ENCODE measurements at regions of chr2 and their contacts with region 1.

Region 1: GRCh38 chr2:164369366-164369765 is 251.9 kb downstream of the GRB14 start:
- DNase-seq: no peak
- ATAC-seq: no peak
- H3K4me3 ChIP-seq: no peak overlapping the region
- H3K27ac ChIP-seq: no peak overlapping the region
- H3K4me1 ChIP-seq: no peaks in the 10 kb centered on the region
- H3K27me3 ChIP-seq: no peaks in the 10 kb centered on the region
- CTCF ChIP-seq: no peak
- POLR2A ChIP-seq: no peak

Region 2: GRCh38 chr2:163990541-163990940 is 378.8 kb before region 1 on chr2:
- intact Hi-C with region 1: no loop called
- DNase-seq: no peak
- ATAC-seq: no peak
- H3K4me3 ChIP-seq: no peak overlapping the region
- H3K27ac ChIP-seq: no peak overlapping the region
- H3K4me1 ChIP-seq: no peaks in the 10 kb centered on the region
- H3K27me3 ChIP-seq: no peaks in the 10 kb centered on the region
- CTCF ChIP-seq: no peak
- POLR2A ChIP-seq: no peak

Region 3: GRCh38 chr2:164182116-164182627 is 187.2 kb before region 1 on chr2:
- intact Hi-C with region 1: loop called in 1 of 2 experiments (anchors 5 kb)
- DNase-seq: no peak
- ATAC-seq: no peak
- H3K4me3 ChIP-seq: no peak overlapping the region
- H3K27ac ChIP-seq: no peak overlapping the region
- H3K4me1 ChIP-seq: no peaks in the 10 kb centered on the region
- H3K27me3 ChIP-seq: no peaks in the 10 kb centered on the region
- CTCF ChIP-seq: no peak
- POLR2A ChIP-seq: no peak